ENCODE measurements at regions of chr20 and their contacts with region 1.

Region 1: GRCh38 chr20:21571841-21572690 is 58.2 kb upstream of the NKX2-2 start:
- DNase-seq: no peak
- ATAC-seq: peak; percentile 16 to 43 (median 40)
- H3K4me3 ChIP-seq: no peak overlapping the region
- H3K27ac ChIP-seq: no peak overlapping the region
- H3K4me1 ChIP-seq: peaks cover 0 to 12% (median 2%) of the 10 kb centered on the region in 4 donors
- H3K27me3 ChIP-seq: no peaks in the 10 kb centered on the region
- CTCF ChIP-seq: peak; percentile 78 to 86 (median 84)
- POLR2A ChIP-seq: no peak

Region 2: DNA sequence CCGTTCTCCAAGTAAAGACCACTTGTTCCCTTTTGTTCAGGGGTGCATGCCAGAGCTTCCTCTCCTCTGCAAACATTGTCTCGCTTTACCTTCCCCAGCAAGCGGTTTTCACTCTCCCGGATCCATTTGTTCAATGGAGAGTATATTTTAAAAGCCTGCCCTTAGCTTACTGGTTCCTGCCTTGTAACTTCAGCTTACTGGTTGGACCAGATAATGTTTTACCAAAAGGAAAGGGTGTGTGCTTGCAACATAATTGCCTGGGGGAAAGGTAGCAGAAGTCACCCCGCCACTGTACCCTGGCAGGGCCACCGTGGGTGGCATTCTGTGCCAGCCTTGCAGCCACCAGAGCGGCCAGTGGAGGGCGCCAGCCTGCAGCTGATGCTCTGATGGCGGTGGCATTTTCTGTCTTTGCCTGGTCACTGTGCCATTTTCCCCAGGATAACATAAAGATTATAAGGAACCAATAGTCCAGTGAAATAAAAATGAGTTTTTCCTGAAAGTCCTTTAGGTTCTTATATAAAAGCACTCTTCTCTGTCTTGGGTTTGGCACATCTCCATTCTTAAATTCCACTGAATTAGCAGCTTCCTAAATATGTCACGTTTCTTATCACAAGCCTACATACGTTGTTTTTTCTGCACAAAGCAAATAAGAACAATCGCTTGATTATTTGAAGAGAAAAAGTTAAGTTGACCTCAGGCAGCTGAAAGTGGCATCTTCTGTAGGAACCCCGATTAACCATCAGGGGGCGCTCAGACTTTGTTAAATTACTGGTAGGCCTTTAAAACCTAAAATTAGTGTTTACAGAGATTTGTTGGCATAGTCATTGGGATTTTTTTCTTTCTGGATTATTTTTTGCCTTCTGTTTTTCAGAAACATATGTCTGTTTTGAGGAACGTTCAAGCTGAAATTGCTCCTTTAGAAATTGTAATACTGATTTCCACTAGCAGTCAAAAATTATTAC is 336.3 kb before region 1 on chr20:
- intact Hi-C with region 1: loop called in 1 of 2 experiments (anchors 10 kb)
- DNase-seq: peak; percentile 63 to 75 (median 67)
- ATAC-seq: peak; percentile 95 to 98 (median 97)
- H3K4me3 ChIP-seq: no peak overlapping the region
- H3K27ac ChIP-seq: no peak overlapping the region
- H3K4me1 ChIP-seq: peaks cover 0 to 8% (median 0%) of the 10 kb centered on the region in 4 donors
- H3K27me3 ChIP-seq: no peaks in the 10 kb centered on the region
- CTCF ChIP-seq: peak; percentile 72 to 79 (median 75)
- POLR2A ChIP-seq: no peak

Region 3: GRCh38 chr20:21450572-21450971 is 121.5 kb before region 1 on chr20:
- intact Hi-C with region 1: no loop called
- DNase-seq: no peak
- ATAC-seq: peak in 1 of 4 donors; percentile 52
- H3K4me3 ChIP-seq: no peak overlapping the region
- H3K27ac ChIP-seq: no peak overlapping the region
- H3K4me1 ChIP-seq: no peaks in the 10 kb centered on the region
- H3K27me3 ChIP-seq: no peaks in the 10 kb centered on the region
- CTCF ChIP-seq: no peak
- POLR2A ChIP-seq: no peak

Region 4: DNA sequence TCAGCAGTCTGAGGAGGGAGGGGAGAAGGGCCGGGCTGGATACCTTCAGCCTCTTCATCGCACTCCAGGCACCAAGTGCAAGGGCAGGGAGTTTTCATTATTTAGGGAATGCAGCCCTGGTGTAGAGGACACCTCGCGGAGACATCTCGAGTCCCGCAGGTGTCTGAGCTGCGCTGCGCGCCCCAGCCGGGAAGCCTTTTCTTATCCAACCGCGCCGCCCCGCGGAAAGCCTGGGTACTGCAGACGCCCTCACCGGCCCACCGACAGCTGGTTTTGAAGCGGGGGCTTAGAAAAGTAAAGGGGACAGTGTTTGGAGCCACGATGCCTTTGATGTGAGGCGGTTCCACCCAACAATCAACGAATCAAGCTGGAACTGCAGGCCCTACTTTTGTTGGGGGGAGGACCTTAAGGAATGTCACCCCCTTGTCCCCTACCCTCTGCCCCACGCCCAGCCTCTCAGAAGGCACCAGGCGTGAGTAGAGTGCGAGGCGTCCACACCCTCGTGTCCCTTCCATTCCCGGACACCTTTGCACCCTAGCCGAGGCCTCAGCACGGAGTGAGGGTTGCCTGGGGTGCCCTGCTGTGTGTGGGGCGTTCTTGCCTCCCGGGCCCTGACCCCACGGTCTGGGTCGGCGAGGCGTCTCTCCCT is 66.8 kb before region 1 on chr20:
- intact Hi-C with region 1: loop called in 1 of 2 experiments (anchors 10 kb)
- DNase-seq: peak; percentile 74 to 83 (median 82)
- ATAC-seq: peak; percentile 82 to 89 (median 88)
- H3K4me3 ChIP-seq: peak overlapping the region in 2 of 3 donors; percentile 26 to 41
- H3K27ac ChIP-seq: no peak overlapping the region
- H3K4me1 ChIP-seq: peaks cover 0 to 15% (median 5%) of the 10 kb centered on the region in 4 donors
- H3K27me3 ChIP-seq: peaks cover 5 to 15% of the 10 kb centered on the region in 2 donors
- CTCF ChIP-seq: peak; percentile 92 to 98 (median 95)
- POLR2A ChIP-seq: no peak

Region 5: GRCh38 chr20:21529863-21530262 is 42.2 kb before region 1 on chr20:
- intact Hi-C with region 1: loop called in 1 of 2 experiments (anchors 5 kb)
- DNase-seq: no peak
- ATAC-seq: peak; percentile 89 to 96 (median 91)
- H3K4me3 ChIP-seq: no peak overlapping the region
- H3K27ac ChIP-seq: no peak overlapping the region
- H3K4me1 ChIP-seq: peaks cover 0 to 9% (median 4%) of the 10 kb centered on the region in 4 donors
- H3K27me3 ChIP-seq: no peaks in the 10 kb centered on the region
- CTCF ChIP-seq: peak; percentile 54 to 75 (median 72)
- POLR2A ChIP-seq: no peak